ENCODE measurements at regions of chr10 and their contacts with region 1.

Region 1: GRCh38 chr10:84026544-84027257 is 112.6 kb upstream of the GHITM start:
- DNase-seq: peak; percentile 33
- H3K4me3 ChIP-seq: no peak overlapping the region
- H3K27ac ChIP-seq: no peak overlapping the region
- H3K4me1 ChIP-seq: no peaks in the 10 kb centered on the region
- H3K27me3 ChIP-seq: no peaks in the 10 kb centered on the region
- CTCF ChIP-seq: peak; percentile 59 to 74
- POLR2A ChIP-seq: no peak

Region 2: GRCh38 chr10:84015877-84016595 is 10.7 kb before region 1 on chr10:
- CTCF ChIA-PET with region 1: interaction called, 13 read pairs
- POLR2A ChIA-PET with region 1: no interaction called
- dilution Hi-C with region 1: no loop called
- intact Hi-C with region 1: no loop called
- DNase-seq: no peak
- H3K4me3 ChIP-seq: no peak overlapping the region
- H3K27ac ChIP-seq: no peak overlapping the region
- H3K4me1 ChIP-seq: no peaks in the 10 kb centered on the region
- H3K27me3 ChIP-seq: no peaks in the 10 kb centered on the region
- CTCF ChIP-seq: no peak
- POLR2A ChIP-seq: no peak

Region 3: DNA sequence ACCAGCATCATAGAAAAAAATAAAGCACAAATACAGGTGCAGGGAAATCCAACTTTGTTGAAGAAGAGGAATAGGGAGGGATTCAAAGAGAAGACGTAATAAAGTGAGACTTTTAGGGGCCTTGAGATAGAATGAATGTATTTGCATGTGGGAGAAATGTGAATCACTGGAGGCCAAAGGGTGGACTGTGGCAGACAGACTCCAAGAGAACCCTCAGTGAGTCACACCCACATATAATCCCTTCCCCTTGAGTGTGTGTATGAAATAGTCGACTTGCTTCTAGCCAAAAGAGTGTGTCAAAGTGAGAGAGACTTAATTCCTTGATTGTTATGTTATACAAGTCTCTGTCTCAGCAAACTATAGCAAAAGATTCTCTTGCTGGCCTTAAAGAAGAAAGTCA is 11.3 kb after region 1 on chr10:
- CTCF ChIA-PET with region 1: interaction called, 16 read pairs
- POLR2A ChIA-PET with region 1: no interaction called
- dilution Hi-C with region 1: no loop called
- intact Hi-C with region 1: no loop called
- DNase-seq: no peak
- H3K4me3 ChIP-seq: no peak overlapping the region
- H3K27ac ChIP-seq: no peak overlapping the region
- H3K4me1 ChIP-seq: no peaks in the 10 kb centered on the region
- H3K27me3 ChIP-seq: no peaks in the 10 kb centered on the region
- CTCF ChIP-seq: no peak
- POLR2A ChIP-seq: no peak

Region 4: GRCh38 chr10:84097787-84098353 is 71.2 kb after region 1 on chr10:
- CTCF ChIA-PET with region 1: interaction called, 13 read pairs
- POLR2A ChIA-PET with region 1: no interaction called
- dilution Hi-C with region 1: no loop called
- intact Hi-C with region 1: loop called (anchors 5 kb)
- DNase-seq: peak; percentile 8
- H3K4me3 ChIP-seq: no peak overlapping the region
- H3K27ac ChIP-seq: no peak overlapping the region
- H3K4me1 ChIP-seq: peaks cover 13% of the 10 kb centered on the region
- H3K27me3 ChIP-seq: peaks cover 0 to 4% of the 10 kb centered on the region in 2 experiments
- CTCF ChIP-seq: peak; percentile 14 to 34
- POLR2A ChIP-seq: no peak